ENCODE measurements at regions of chr4 and their contacts with region 1.

Region 1: GRCh38 chr4:118772081-118772766 is 63.7 kb downstream of the SEC24D start:
- DNase-seq: peak in 1 of 2 experiments; percentile 20
- H3K4me3 ChIP-seq: no peak overlapping the region
- H3K4me3 Mint-ChIP-seq: no peak overlapping the region
- H3K27ac Mint-ChIP-seq: no peak overlapping the region
- H3K4me1 ChIP-seq: no peaks in the 10 kb centered on the region
- H3K4me1 Mint-ChIP-seq: no peaks in the 10 kb centered on the region
- H3K27me3 ChIP-seq: no peaks in the 10 kb centered on the region
- H3K27me3 Mint-ChIP-seq: no peaks in the 10 kb centered on the region
- CTCF ChIP-seq: peak; percentile 22 to 40

Region 2: DNA sequence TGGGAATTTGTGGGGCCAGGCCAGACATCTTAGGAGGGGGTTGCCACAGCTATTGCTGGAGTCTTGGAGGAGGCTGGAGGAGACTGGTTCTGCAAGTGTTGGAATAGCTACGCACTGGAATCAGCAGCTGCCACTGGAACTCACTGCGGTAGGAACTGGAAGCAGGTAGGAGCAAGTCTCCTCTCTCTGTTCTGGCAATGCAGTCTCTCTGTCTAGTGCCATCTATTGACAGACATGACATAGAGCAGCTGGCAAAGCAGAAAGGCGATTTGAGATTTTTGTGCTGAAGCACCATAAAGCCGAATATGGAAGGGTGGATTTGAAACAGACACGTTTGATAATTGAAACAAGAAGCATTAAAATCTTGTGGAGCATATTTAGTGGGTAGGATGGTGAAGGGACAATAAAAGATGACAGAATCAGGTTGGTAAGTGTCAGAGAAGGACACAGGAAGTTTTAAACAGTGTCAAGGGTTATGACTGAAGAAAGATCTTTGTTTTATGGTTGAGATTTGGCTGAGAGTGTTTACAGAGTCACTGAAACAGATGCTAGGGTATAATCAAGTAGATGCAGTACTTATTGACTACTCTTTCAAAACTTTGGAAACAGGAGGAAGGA is 93.0 kb after region 1 on chr4:
- CTCF ChIA-PET with region 1: interaction called, 7 read pairs
- POLR2A ChIA-PET with region 1: no interaction called
- intact Hi-C with region 1: loop called (anchors 1 kb)
- DNase-seq: peak; percentile 60 to 71
- H3K4me3 ChIP-seq: no peak overlapping the region
- H3K4me3 Mint-ChIP-seq: no peak overlapping the region
- H3K27ac Mint-ChIP-seq: no peak overlapping the region
- H3K4me1 ChIP-seq: no peaks in the 10 kb centered on the region
- H3K4me1 Mint-ChIP-seq: no peaks in the 10 kb centered on the region
- H3K27me3 ChIP-seq: no peaks in the 10 kb centered on the region
- H3K27me3 Mint-ChIP-seq: peaks cover 11% of the 10 kb centered on the region
- CTCF ChIP-seq: peak; percentile 57 to 82

Region 3: DNA sequence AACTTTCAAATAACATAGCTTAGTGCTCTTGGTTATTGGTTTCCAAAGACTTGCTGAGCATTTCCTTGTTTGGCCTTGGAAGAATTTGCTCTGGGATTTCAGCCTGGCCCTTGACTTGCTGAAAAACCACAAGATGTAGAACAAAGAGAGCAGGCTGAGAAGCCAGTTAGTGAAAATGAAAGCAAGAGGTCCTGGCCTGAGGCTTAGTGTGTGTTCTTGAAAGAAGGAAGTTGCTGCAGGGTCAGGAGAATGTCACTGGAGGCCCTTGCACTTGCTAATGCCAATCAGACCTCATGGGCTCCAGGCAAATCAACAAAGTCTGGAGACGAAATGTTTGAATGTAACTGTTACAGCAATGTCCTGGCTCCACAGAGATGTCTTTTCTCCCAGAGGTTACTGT is 195.8 kb after region 1 on chr4:
- CTCF ChIA-PET with region 1: interaction called, 5 read pairs
- POLR2A ChIA-PET with region 1: no interaction called
- intact Hi-C with region 1: loop called (anchors 1 kb)
- DNase-seq: no peak
- H3K4me3 ChIP-seq: no peak overlapping the region
- H3K4me3 Mint-ChIP-seq: no peak overlapping the region
- H3K27ac Mint-ChIP-seq: no peak overlapping the region
- H3K4me1 ChIP-seq: peaks cover 10% of the 10 kb centered on the region; the same call in 1 of the 2 replicates
- H3K4me1 Mint-ChIP-seq: peaks cover 8% of the 10 kb centered on the region
- H3K27me3 ChIP-seq: no peaks in the 10 kb centered on the region
- H3K27me3 Mint-ChIP-seq: no peaks in the 10 kb centered on the region
- CTCF ChIP-seq: no peak

Measured in Caco-2 (cell line).